HepG2 (cell line): ENCODE measurements at regions of chr22 and their contacts with region 1.

Region 1: DNA sequence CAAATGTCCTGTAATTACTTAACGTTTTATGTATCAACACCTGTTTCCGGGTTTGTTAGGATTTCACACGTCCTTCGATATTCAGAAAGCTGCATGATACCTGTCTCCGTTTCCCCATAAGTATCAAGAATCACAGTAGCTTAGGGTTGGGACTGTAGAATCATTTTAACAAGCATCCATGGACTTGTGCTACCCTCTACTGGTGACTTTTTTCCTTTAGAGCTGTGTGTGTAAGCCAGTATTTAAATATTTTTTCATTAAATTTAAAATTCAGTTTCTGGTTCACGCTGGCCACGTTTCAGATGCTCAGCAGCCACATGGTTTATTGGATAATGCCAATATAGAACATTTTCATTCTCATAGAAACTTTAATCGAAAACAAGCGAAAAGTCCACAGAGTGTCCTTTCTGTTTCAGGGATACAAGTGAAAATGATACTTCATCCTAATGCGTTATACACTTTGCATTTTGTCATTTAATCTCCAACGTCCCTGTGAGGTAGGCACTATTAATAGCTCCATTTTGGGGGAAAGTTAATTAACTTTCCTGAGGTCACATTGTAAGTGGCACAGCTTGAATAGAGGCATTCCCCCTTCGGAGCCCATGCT is 61.5 kb upstream of the SLC25A18 start:
- DNase-seq: peak; percentile 63
- ATAC-seq: peak; percentile 89
- H3K4me3 ChIP-seq: no peak overlapping the region
- H3K27ac ChIP-seq: no peak overlapping the region
- H3K4me1 ChIP-seq: no peaks in the 10 kb centered on the region
- H3K27me3 ChIP-seq: peaks cover 0 to 25% of the 10 kb centered on the region in 2 experiments; a peak in 3 of 5 replicates
- CTCF ChIP-seq: peak; percentile 68
- EP300 ChIP-seq: no peak
- POLR2A ChIP-seq: no peak
- RAD21 ChIP-seq: peak; percentile 47; the same call in 1 of the 2 replicates

Region 2: DNA sequence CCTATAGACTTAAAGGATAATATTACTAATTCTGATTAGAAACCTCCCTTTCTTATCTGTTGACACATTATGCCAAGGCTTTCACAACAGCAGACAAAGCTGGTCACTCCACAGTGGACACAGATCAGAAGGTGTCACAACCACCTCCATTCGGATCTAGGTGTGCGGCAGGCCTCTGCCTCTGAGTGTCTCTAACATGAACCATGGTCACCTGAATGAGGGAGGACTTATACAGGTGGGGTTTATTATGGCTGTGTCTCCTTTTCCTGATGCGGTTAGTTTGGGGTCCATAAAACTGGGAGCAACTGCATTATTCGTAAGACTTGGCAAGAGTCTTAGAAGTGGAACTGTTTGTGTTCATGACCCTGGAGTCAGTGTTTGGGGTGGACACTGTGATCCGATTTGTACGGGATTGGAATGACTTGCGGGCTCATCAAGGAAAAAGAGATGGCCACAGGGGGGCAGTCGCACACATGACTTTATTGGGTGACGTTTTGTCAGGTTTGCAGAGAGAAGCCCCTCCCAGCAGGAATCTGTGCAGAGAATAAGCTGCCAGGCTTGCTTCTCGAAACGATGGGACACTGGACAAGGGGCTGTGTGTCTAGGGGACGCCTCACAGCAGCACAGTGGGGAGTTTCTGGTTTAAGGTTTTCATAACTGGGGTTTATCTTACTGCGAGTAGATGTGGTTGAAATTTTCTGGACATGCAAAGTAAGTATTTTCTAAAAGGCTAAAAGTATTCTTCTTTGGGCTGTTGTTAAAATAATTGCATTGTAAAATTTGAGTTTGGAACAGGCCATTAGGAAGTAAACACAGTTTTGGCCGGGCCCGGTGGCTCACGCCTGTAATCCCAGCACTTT is 584.4 kb before region 1 on chr22:
- CTCF ChIA-PET with region 1: no interaction called
- POLR2A ChIA-PET with region 1: no interaction called
- in situ Hi-C with region 1: no loop called
- intact Hi-C with region 1: loop called (anchors 5 kb)
- DNase-seq: peak; percentile 57
- ATAC-seq: peak; percentile 95
- H3K4me3 ChIP-seq: no peak overlapping the region
- H3K27ac ChIP-seq: no peak overlapping the region
- H3K4me1 ChIP-seq: no peaks in the 10 kb centered on the region
- H3K27me3 ChIP-seq: no peaks in the 10 kb centered on the region; a peak in 2 of 5 replicates
- CTCF ChIP-seq: peak; percentile 71
- EP300 ChIP-seq: no peak
- POLR2A ChIP-seq: no peak
- RAD21 ChIP-seq: no peak

Region 3: GRCh38 chr22:17077255-17077654 is 424.5 kb before region 1 on chr22:
- CTCF ChIA-PET with region 1: interaction called, 17 read pairs
- POLR2A ChIA-PET with region 1: no interaction called
- in situ Hi-C with region 1: loop called (anchors 10 kb)
- intact Hi-C with region 1: loop called (anchors 1 kb)
- DNase-seq: no peak
- ATAC-seq: no peak
- H3K4me3 ChIP-seq: no peak overlapping the region
- H3K27ac ChIP-seq: no peak overlapping the region
- H3K4me1 ChIP-seq: no peaks in the 10 kb centered on the region
- H3K27me3 ChIP-seq: no peaks in the 10 kb centered on the region
- CTCF ChIP-seq: no peak
- EP300 ChIP-seq: no peak
- POLR2A ChIP-seq: no peak
- RAD21 ChIP-seq: no peak

Region 4: GRCh38 chr22:17119481-17120202 is 382.1 kb before region 1 on chr22:
- CTCF ChIA-PET with region 1: interaction called, 3 read pairs
- POLR2A ChIA-PET with region 1: no interaction called
- in situ Hi-C with region 1: no loop called
- intact Hi-C with region 1: loop called (anchors 1 kb)
- DNase-seq: no peak
- ATAC-seq: peak; percentile 76
- H3K4me3 ChIP-seq: no peak overlapping the region
- H3K27ac ChIP-seq: no peak overlapping the region
- H3K4me1 ChIP-seq: no peaks in the 10 kb centered on the region
- H3K27me3 ChIP-seq: peaks cover 7 to 26% of the 10 kb centered on the region in 2 experiments; a peak in 4 of 5 replicates
- CTCF ChIP-seq: peak; percentile 52
- EP300 ChIP-seq: no peak
- POLR2A ChIP-seq: no peak
- RAD21 ChIP-seq: peak; percentile 67

Region 5: DNA sequence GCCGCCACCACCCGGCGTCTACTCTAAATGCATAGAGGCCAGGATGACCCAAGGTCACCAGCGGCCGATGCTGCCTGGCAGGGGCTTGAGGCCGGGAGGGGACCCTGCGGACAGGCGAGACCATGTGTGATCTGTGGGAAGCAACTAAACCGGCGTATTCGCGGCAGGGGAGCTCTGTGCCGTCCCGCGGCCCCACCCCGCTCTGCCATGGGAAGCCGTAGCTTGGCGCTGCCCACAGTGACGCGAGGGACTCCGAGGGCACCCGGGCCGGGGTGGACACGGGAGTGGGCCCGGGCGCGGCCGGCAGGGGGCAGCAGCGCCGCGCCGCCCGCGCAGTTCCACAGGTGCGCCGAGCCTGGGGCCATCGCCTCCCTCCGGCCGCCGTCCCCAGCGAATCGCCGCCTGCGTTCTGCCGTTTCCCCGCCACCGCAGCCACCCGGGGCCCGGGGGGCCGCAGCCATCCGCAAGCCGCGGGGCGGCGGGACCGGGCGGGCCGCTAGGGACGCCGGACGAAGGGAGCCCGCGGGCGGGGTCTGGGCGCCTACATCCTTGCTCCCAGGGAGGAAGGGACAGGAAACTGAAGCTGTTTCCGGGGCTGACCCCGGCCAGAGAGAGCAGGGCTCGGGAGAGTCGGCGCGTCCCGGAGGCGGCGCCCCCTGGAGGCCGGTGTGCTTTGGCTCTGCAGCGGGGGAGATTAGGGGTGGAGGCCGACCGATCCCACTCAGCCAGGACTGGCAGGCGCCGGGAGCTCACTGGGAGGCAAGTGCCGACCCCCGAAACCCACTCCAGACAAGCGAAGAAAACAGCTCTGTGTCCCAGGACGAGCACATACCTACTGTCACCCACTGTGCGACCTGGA is 330.2 kb before region 1 on chr22:
- CTCF ChIA-PET with region 1: interaction called, 8 read pairs
- POLR2A ChIA-PET with region 1: no interaction called
- in situ Hi-C with region 1: no loop called
- intact Hi-C with region 1: loop called (anchors 5 kb)
- DNase-seq: peak; percentile 79
- ATAC-seq: peak; percentile 96
- H3K4me3 ChIP-seq: peak overlapping the region; percentile 49 to 78 (median 68); a peak in 5 of 6 replicates
- H3K27ac ChIP-seq: peak overlapping the region; percentile 44
- H3K4me1 ChIP-seq: no peaks in the 10 kb centered on the region
- H3K27me3 ChIP-seq: no peaks in the 10 kb centered on the region
- CTCF ChIP-seq: peak; percentile 78
- EP300 ChIP-seq: peak in 1 of 2 experiments; percentile 41; a peak in 1 of 4 replicates
- POLR2A ChIP-seq: 0 out of 4 replicates have a peak, but pooled peaks have one; percentile 33 to 37
- RAD21 ChIP-seq: peak; percentile 86

Region 6: DNA sequence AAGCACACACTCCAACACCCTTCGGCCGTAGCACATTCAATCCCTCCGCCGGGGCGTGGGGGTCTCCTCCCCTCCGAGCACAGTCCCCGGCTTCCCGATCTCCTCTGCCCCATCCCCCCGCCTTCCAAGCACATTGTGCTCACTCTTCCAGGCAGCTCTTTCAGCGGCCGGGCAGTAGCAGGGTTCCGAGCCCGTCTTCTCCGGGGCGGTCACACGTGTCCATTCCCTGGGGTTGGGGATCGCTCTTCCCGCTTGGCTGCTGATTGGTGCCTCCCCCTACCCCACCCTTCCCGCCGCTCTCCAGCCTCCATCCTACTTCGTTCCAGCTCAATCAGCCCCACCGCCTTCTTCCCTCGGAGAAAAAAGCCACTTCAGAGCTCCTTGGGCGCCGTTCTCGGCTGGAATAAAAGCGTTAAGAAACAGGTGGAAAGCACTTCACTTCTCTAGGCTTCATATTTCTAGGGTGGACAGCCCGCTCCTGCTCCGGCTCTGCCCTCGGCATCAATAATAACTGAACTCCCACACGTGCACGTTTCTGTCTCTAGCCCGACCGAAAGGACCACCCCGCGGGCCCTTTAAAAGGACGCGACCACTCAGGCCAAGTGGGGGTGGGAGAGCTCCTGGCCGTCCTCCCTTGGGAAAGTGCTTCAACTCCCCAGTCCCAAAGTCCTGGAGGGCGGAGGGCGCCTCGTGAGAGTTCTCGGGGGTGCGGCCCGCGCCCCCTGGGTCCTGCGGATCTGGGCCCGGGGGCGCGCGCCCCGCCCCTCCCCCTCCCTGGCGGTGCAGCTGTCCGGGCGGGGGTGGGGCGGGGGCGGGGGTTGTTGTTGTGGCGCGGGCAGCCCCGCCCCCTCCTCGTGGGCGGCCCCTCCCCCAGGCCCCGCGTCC is 133.0 kb before region 1 on chr22:
- CTCF ChIA-PET with region 1: no interaction called
- POLR2A ChIA-PET with region 1: no interaction called
- in situ Hi-C with region 1: no loop called
- intact Hi-C with region 1: loop called (anchors 5 kb)
- DNase-seq: no peak
- ATAC-seq: peak; percentile 65
- H3K4me3 ChIP-seq: peak overlapping the region in 2 of 3 experiments; percentile 16 to 33; a peak in 2 of 6 replicates
- H3K27ac ChIP-seq: no peak overlapping the region
- H3K4me1 ChIP-seq: peaks cover 9% of the 10 kb centered on the region; the same call in 1 of the 2 replicates
- H3K27me3 ChIP-seq: peaks cover 9 to 47% of the 10 kb centered on the region in 2 experiments; a peak in 4 of 5 replicates
- CTCF ChIP-seq: no peak
- EP300 ChIP-seq: no peak
- POLR2A ChIP-seq: no peak
- RAD21 ChIP-seq: no peak

Region 7: DNA sequence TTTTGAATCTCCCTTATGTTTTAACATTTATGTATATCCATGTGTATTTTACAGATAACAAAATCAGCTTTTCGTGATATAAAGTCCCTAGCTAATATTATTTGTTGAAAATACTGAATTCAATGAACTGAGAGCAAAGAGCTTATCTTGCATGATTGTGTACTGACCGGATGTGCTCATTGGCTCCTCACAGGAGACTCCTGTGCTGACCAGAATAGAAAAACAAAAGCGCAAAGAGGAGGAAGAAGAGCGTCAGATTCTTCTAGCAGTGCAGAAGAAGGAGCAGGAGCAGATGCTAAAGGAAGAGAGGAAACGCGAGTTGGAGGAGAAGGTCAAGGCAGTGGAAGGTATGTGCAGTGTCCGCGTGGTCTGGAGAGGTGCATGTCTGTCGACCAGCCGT is 22.1 kb after region 1 on chr22:
- CTCF ChIA-PET with region 1: no interaction called
- POLR2A ChIA-PET with region 1: no interaction called
- in situ Hi-C with region 1: no loop called
- intact Hi-C with region 1: no loop called
- DNase-seq: no peak
- ATAC-seq: no peak
- H3K4me3 ChIP-seq: no peak overlapping the region
- H3K27ac ChIP-seq: no peak overlapping the region
- H3K4me1 ChIP-seq: peaks cover 5% of the 10 kb centered on the region; the same call in 1 of the 2 replicates
- H3K27me3 ChIP-seq: peaks cover 0 to 21% of the 10 kb centered on the region in 2 experiments; a peak in 2 of 5 replicates
- CTCF ChIP-seq: no peak
- EP300 ChIP-seq: no peak
- POLR2A ChIP-seq: no peak
- RAD21 ChIP-seq: no peak